ENCODE measurements at regions of chr2 and their contacts with region 1.

Region 1: GRCh38 chr2:215435809-215436704 is at the start of gene FN1:
- DNase-seq: peak; percentile 82
- ATAC-seq: peak; percentile 59
- H3K4me3 ChIP-seq: peak within 1 kb of the TSS; percentile 97
- H3K27ac ChIP-seq: peak within 1 kb of the TSS; percentile 82
- H3K4me1 ChIP-seq: peaks cover 38% of the 10 kb centered on the region
- H3K27me3 ChIP-seq: no peaks in the 10 kb centered on the region
- CTCF ChIP-seq: no peak
- total RNA-seq, gene FN1: 220 and 248 TPM in 2 replicates

Region 2: GRCh38 chr2:215410932-215411285 is 25.1 kb before region 1 on chr2:
- CTCF ChIA-PET with region 1: no interaction called
- POLR2A ChIA-PET with region 1: no interaction called
- intact Hi-C with region 1: loop called (anchors 1 kb)
- DNase-seq: peak; percentile 97
- ATAC-seq: peak; percentile 81
- H3K4me3 ChIP-seq: peak overlapping the region; percentile 28; the same call in 1 of the 2 replicates
- H3K27ac ChIP-seq: peak overlapping the region; percentile 89
- H3K4me1 ChIP-seq: peaks cover 39% of the 10 kb centered on the region
- H3K27me3 ChIP-seq: no peaks in the 10 kb centered on the region
- CTCF ChIP-seq: no peak

Region 3: GRCh38 chr2:215635788-215636139 is 199.7 kb after region 1 on chr2:
- CTCF ChIA-PET with region 1: no interaction called
- POLR2A ChIA-PET with region 1: no interaction called
- intact Hi-C with region 1: no loop called
- DNase-seq: peak; percentile 84
- ATAC-seq: peak; percentile 98
- H3K4me3 ChIP-seq: no peak overlapping the region
- H3K27ac ChIP-seq: no peak overlapping the region
- H3K4me1 ChIP-seq: peaks cover 9% of the 10 kb centered on the region
- H3K27me3 ChIP-seq: no peaks in the 10 kb centered on the region
- CTCF ChIP-seq: peak; percentile 55; the same call in 1 of the 2 replicates

Region 4: DNA sequence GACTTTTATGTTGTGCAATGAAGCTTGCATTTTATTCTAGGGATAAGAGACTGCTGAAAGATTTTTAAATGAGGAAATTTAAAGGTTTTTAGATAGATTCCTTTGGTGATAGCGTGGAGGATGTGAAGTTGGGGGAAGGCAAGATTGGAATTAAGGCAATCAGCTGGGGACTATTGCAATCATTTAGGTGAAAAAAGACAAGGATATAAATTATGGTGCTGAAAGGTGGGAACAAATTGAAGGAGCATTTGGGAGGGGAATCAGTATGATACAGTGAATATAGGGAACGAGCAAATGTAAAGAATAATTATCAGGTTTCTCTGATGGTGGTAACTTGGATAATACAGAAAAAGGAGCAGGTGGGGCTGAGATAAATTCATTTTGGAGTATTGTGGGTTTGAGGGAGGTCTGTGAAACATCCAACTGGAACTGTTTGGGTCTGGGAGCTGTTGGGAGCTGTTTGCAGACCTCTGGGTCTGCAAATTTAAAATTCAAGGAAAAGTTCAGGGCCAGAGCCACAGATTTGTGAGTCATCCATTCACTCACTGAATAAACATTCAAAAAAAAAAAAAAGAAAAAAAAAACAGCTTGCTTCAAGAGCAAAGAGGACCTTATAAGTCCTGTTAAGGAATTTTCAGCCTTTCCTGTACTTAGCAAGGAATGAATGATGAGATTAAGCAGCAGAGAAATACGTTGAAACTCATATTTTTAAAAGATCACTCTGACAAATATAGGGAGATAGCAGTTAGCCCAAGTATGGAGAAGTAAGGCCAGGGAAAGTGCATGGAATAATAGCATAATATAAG is 257.3 kb after region 1 on chr2:
- CTCF ChIA-PET with region 1: no interaction called
- POLR2A ChIA-PET with region 1: interaction called, 4 read pairs
- intact Hi-C with region 1: loop called (anchors 5 kb)
- DNase-seq: peak; percentile 85
- ATAC-seq: peak; percentile 88
- H3K4me3 ChIP-seq: peak overlapping the region; percentile 22; the same call in 1 of the 2 replicates
- H3K27ac ChIP-seq: peak overlapping the region; percentile 62
- H3K4me1 ChIP-seq: peaks cover 32% of the 10 kb centered on the region
- H3K27me3 ChIP-seq: no peaks in the 10 kb centered on the region
- CTCF ChIP-seq: no peak

Measured in PC-3 (cell line).